HEK293 (cell line): ENCODE measurements at regions of chr19 and their contacts with region 1.

Region 1: DNA sequence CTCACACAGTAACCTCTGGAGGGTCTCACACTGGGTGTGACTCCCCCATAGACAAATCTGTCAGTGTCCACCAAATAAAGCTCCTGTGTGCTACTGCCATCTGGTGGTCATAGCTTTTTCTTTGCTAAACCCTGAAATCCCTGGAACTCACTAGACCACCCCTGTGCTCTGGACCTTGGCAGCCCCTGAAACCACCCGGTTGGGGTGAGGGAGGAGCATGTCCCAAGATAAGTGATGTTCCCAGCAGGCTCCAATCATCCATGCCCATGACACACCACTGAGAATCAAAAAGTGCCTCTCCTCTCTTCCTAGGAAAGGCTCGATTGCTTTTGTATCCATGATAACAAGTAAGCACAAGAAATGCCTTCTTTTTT is 6.5 kb upstream of the HSD17B14 start:
- H3K4me3 ChIP-seq: no peak overlapping the region
- H3K27ac ChIP-seq: no peak overlapping the region
- H3K4me1 ChIP-seq: no peaks in the 10 kb centered on the region
- CTCF ChIP-seq: peak; percentile 74

Region 2: GRCh38 chr19:48646001-48646721 is 196.6 kb before region 1 on chr19 and contains the start of gene CA11:
- CTCF ChIA-PET with region 1: interaction called, 21 read pairs
- POLR2A ChIA-PET with region 1: no interaction called
- H3K4me3 ChIP-seq: peak within 1 kb of the TSS; percentile 44
- H3K27ac ChIP-seq: peak within 1 kb of the TSS; percentile 70
- H3K4me1 ChIP-seq: peaks cover 9% of the 10 kb centered on the region
- CTCF ChIP-seq: peak; percentile 96

Region 3: GRCh38 chr19:48777139-48777538 is 65.6 kb before region 1 on chr19:
- CTCF ChIA-PET with region 1: no interaction called
- POLR2A ChIA-PET with region 1: no interaction called
- H3K4me3 ChIP-seq: no peak overlapping the region
- H3K27ac ChIP-seq: no peak overlapping the region
- H3K4me1 ChIP-seq: 0 out of 2 replicates have a peak, but pooled peaks cover 2% of the 10 kb centered on the region
- CTCF ChIP-seq: no peak

Region 4: DNA sequence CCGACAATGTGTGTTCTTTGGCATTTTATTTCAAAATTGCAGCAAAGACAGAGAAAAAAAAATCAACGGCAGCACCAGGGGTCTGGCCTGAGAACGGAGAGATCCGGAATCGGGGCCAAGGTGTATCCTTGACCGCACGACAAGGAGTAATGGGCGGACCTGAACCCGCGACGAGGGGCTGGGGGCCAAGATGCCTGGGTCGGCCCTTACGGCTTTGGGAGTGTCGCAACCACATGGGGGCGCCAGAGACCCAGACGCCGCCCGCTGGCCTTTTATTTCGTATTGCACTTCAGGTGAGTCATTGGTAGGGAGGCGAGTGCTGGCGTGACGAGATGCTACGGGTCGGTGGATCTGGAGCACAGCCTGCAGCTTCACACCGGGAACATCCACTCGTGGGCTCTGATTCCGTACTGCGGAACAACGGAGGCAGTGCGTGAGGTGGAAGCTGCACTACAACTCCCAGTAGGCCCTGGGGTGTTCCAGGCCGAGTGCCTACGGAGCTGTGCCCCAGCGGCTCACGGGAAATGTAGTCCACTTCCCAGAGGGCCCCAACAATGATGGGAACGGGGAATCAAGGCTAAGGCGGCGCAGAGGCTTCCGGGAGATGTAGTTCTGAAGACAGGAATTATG is 47.6 kb before region 1 on chr19:
- CTCF ChIA-PET with region 1: interaction called, 160 read pairs
- POLR2A ChIA-PET with region 1: interaction called, 3 read pairs
- H3K4me3 ChIP-seq: peak overlapping the region; percentile 54
- H3K27ac ChIP-seq: no peak overlapping the region; the same call in 1 of the 2 replicates
- H3K4me1 ChIP-seq: no peaks in the 10 kb centered on the region
- CTCF ChIP-seq: peak; percentile 99

Region 5: GRCh38 chr19:48853483-48853882 is 10.7 kb after region 1 on chr19:
- CTCF ChIA-PET with region 1: interaction called, 37 read pairs
- POLR2A ChIA-PET with region 1: interaction called, 3 read pairs
- H3K4me3 ChIP-seq: no peak overlapping the region
- H3K27ac ChIP-seq: no peak overlapping the region
- H3K4me1 ChIP-seq: no peaks in the 10 kb centered on the region; the same call in 1 of the 2 replicates
- CTCF ChIP-seq: no peak

Region 6: DNA sequence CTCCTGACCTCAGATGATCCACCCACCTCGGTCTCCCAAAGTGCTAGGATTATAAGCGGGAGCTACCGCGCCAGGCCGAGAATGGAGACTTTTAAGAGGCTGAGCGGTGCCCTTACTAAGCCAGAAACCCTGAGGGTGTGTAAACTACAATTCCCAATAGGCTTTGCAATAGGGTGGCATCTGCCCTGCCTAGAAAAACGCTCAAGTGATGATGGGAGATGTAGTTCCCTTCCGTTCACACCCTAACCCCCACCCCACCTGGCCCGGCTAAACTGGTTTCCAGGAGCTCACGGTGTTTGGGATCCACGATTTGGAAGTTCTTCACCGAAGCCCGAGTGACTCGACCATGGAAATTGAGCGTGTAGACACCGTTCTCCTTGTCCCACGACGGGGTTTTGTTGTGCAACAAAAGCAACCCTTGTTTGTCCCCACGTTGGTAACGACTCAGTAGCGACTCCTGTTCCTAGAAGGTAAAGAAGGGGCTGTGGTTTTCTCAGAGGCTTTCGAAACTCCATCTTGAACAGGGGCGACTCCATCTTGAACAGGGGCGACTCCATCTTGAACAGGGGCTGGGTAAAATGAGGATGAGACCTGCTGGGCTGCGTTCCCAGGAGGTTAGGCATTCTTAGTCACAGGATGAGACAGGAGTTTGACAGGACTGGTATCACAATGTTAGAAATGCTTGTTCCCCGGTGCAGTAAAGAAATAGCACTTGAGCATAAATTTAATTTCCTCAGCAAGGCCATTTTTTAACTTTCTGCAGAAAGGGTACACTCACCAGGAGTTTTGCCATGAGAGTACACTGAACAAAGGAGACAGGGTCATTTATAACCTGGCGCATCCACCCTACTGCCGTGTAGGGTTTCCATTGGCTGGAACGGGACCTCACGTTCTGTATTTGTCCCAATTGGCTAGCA is 39.2 kb after region 1 on chr19:
- CTCF ChIA-PET with region 1: interaction called, 22 read pairs
- POLR2A ChIA-PET with region 1: no interaction called
- H3K4me3 ChIP-seq: no peak overlapping the region
- H3K27ac ChIP-seq: no peak overlapping the region
- H3K4me1 ChIP-seq: no peaks in the 10 kb centered on the region
- CTCF ChIP-seq: no peak